ENCODE measurements at regions of chr1 and their contacts with region 1.

Region 1: DNA sequence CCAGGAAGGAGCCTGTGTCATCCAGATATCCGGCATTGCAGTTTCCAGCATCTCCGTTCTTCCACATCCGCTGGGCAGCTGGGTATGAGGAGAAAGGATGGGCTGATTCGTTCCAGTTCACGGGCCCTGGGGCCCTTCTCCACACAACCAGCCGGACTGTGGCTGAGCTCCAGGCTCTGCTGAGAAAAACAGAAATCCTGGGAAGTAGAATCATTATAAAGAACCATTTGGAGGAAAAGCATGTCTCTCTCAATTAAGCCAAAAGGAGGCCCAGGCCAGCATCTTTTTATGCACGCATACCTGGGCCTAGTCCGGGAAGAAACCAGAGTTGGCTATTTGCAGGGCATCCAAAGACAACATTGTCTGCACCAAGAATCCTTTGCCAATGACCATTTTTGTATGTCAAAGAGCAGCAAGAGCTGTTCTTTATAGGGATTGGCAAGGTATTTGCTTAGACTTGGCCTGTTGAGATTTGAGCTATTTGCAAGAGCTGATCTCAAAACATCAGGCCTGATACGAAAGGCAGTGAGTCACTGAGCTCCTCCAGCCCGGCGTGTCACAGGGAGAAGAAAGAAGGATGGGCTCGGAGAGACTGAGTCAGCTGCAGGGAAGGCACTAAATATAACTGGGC is 84.9 kb upstream of the ARHGEF16 start:
- DNase-seq: no peak
- ATAC-seq: no peak
- H3K4me3 ChIP-seq: no peak overlapping the region
- H3K27ac ChIP-seq: no peak overlapping the region
- H3K4me1 ChIP-seq: no peaks in the 10 kb centered on the region
- H3K27me3 ChIP-seq: no peaks in the 10 kb centered on the region; a peak in 1 of 4 replicates
- CTCF ChIP-seq: no peak
- EP300 ChIP-seq: no peak
- POLR2A ChIP-seq: no peak
- RAD21 ChIP-seq: no peak

Region 2: DNA sequence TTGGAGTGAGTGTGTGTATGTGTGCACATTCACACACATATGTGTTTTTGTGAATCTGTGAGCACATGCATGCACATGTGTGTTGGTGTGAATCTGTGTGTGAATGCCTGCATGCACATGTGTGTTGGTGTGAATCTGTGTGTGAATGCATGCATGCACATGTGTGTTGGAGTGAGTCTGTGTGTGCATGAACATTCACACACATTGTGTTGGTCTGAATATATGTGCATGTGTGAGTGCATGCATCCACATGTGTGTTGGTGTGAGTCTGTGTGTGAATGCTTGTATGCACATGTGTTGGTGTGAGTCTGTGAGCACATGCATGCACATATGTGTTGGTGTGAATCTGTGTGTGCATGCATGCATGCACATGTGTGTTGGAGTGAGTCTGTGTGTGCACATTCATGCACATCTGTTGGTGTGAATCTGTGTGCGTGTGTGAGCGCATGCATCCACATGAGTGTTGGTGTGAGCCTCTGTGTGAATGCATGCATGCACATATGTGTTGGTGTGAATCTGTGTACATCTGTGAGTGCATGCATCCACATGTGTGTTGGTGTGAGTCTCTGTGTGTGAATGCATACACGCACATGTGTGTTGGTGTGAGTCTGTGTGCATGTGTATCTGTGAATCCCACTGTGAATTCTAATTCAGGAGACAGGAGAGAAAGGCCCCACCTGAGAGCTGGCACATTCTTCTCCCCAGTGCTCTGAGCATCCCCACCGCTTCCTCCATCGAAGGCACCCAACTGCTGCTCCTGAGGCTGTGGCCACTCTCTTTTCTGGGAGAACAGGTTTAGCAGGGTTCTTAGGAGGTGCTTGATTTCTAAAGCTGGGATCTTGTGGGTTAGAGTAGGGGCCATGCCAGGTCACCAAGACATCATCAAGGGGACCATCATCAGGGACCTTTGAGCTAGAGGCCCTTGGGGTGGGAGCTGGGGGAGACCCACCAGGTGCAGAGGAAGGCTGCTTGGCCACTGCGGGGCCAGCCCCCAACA is 32.6 kb before region 1 on chr1:
- CTCF ChIA-PET with region 1: no interaction called
- POLR2A ChIA-PET with region 1: no interaction called
- RAD21 ChIA-PET with region 1: no interaction called
- SMC1A ChIA-PET with region 1: no interaction called
- in situ Hi-C with region 1: no loop called
- intact Hi-C with region 1: no loop called
- DNase-seq: no peak
- ATAC-seq: no peak
- H3K4me3 ChIP-seq: no peak overlapping the region
- H3K27ac ChIP-seq: no peak overlapping the region
- H3K4me1 ChIP-seq: no peaks in the 10 kb centered on the region
- H3K27me3 ChIP-seq: no peaks in the 10 kb centered on the region
- CTCF ChIP-seq: no peak
- EP300 ChIP-seq: no peak
- POLR2A ChIP-seq: no peak
- RAD21 ChIP-seq: no peak

Region 3: GRCh38 chr1:3431266-3431665 is 61.7 kb after region 1 on chr1:
- CTCF ChIA-PET with region 1: no interaction called
- POLR2A ChIA-PET with region 1: no interaction called
- RAD21 ChIA-PET with region 1: no interaction called
- SMC1A ChIA-PET with region 1: no interaction called
- in situ Hi-C with region 1: loop called (anchors 10 kb)
- intact Hi-C with region 1: no loop called
- DNase-seq: no peak
- ATAC-seq: peak; percentile 62; the same call in 2 of the 3 replicates
- H3K4me3 ChIP-seq: no peak overlapping the region
- H3K27ac ChIP-seq: no peak overlapping the region
- H3K4me1 ChIP-seq: no peaks in the 10 kb centered on the region
- H3K27me3 ChIP-seq: no peaks in the 10 kb centered on the region
- CTCF ChIP-seq: peak in 1 of 3 experiments; percentile 24; a peak in 1 of 6 replicates
- EP300 ChIP-seq: no peak
- POLR2A ChIP-seq: no peak
- RAD21 ChIP-seq: no peak